Dorsolateral prefrontal cortex (tissue), 120 donors: ENCODE measurements at regions of chr1 and their contacts with region 1.

Region 1: DNA sequence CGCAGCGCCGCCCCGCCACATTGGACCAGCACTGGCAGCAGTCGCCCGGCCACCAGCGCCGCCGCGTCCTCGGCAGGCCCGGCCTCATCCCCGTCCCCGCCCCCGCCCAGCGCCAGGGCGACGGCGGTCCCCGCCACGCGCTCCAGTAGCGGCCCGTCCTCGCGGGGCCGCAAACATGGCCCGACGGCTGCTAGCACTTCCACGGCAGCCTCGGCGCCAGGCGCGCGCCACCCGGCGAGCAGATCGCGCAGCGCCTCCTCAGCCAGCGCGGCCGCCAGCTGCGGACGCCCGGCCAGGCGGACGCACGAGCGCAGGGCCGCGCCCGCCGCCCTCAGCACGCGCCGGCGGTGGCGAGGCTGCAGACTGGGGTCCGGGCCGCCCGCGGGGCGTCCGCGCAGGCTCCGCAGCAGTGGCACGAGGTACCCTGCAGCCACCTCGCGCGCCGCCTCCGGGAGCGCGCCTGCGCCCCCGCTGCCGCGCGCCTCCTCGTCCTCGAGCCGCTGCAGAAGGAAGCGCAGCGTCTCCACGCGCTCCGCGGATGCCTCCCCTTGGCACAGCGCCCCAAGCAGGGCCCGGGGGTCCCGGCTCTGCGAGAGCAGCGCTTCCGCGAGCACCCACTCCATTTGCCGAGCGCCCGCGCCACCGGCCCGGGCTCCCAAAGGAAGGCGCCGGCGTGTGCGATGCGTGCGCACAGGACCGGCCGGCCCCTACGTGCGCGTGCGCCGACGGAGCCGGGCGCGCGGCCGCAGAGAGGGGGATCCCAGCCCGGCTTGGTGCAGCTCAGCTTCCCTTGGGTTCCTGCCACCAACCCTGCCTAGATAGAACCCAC is at the start of gene TARBP1:
- DNase-seq: peak in 8 of 10 donors; percentile 42 to 82 (median 56)
- H3K4me3 ChIP-seq: peak within 1 kb of the TSS; percentile 52 to 90 (median 74)
- H3K27ac ChIP-seq: peak within 1 kb of the TSS; percentile 49 to 97 (median 89)
- H3K27me3 ChIP-seq: no peaks in the 10 kb centered on the region
- CTCF ChIP-seq: peak in 17 of 56 donors; percentile 3 to 33 (median 21)
- total RNA-seq, gene TARBP1: 27.7 to 158 (median 75.1) TPM

Region 2: DNA sequence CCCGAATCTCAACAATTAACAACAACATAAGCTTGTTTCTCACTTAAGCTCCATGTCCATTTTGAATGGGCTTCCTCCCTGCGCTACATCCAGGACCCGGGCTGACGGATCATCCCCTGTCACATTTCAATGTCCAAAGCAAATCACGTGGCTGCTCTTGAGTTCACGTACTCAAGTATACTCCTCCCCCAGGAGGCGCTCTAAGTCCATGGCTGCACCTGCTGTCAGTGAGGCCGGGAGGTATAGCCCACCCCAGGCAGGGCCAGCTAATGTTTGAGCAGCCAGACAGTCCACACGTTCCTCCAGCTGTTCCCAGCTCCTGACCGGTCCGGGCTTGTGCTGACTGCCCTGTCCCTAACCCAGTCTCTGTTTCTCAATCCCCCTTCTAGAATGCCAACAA is 353.4 kb before region 1 on chr1:
- intact Hi-C with region 1: no loop called
- DNase-seq: no peak
- H3K4me3 ChIP-seq: no peak overlapping the region
- H3K27ac ChIP-seq: no peak overlapping the region
- H3K27me3 ChIP-seq: peaks cover 0 to 28% (median 0%) of the 10 kb centered on the region in 45 donors
- CTCF ChIP-seq: peak in 2 of 56 donors; percentile 17 to 20

Region 3: GRCh38 chr1:234260578-234260977 is 218.1 kb before region 1 on chr1:
- intact Hi-C with region 1: no loop called
- DNase-seq: no peak
- H3K4me3 ChIP-seq: no peak overlapping the region
- H3K27ac ChIP-seq: peak overlapping the region in 1 of 59 donors; percentile 86
- H3K27me3 ChIP-seq: peaks cover 0 to 7% (median 0%) of the 10 kb centered on the region in 45 donors
- CTCF ChIP-seq: no peak

Region 4: DNA sequence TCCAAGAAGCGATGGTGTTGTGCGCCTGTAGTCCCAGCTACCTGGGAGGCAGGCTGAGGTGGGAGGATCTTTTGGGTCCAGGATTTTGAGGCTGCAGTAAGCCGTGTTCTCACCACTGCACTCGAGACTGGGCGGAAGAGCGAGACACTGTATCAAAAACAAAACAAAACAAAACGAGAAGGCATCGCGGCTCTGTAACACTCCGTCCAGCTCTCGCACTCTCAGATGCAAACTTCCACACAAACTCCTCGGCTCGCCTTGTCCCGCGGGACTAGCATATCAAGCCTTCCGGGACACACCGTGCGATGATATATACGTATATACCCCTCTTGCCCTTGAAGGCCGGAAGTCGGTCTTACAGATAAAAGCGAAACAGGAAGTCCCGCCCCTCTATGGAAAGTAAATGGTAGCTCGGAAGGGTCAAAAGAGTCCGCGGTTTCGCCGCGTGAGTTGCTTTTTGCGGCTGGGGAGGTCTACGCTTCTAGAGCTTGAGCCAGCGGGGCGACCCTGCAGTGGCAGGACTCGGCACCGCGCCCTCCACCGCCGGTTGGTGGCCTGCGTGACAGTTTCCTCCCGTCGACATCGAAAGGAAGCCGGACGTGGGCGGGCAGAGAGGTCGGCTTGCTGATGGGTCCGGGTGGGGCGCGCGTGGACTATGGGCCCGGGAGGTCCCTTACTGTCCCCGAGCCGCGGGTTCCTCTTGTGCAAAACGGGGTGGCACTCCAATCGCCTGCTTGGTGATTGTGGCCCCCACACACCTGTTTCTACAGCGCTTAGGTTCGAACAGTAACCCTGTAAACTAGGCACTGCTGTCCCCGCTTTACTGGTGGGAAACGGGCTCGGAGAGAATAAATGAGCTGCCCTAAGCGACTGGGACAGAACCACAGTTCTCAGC is 105.4 kb before region 1 on chr1 and contains the start of gene COA6:
- intact Hi-C with region 1: loop called (anchors 5 to 10 kb)
- DNase-seq: peak; percentile 82 to 92 (median 90)
- H3K4me3 ChIP-seq: peak within 1 kb of the TSS; percentile 60 to 98 (median 86)
- H3K27ac ChIP-seq: peak within 1 kb of the TSS; percentile 92 to 100 (median 98)
- H3K27me3 ChIP-seq: no peaks in the 10 kb centered on the region
- CTCF ChIP-seq: peak in 30 of 56 donors; percentile 4 to 63 (median 28)
- total RNA-seq, gene COA6: 17.7 to 56.0 (median 37.2) TPM

Region 5: GRCh38 chr1:234842726-234843641 is 364.3 kb after region 1 on chr1:
- intact Hi-C with region 1: no loop called
- DNase-seq: peak in 2 of 10 donors; percentile 30 to 69
- H3K4me3 ChIP-seq: peak overlapping the region in 1 of 59 donors; percentile 21
- H3K27ac ChIP-seq: peak overlapping the region in 5 of 59 donors; percentile 9 to 53 (median 36)
- H3K27me3 ChIP-seq: no peaks in the 10 kb centered on the region
- CTCF ChIP-seq: no peak